ENCODE measurements at regions of chr4 and their contacts with region 1.

Region 1: DNA sequence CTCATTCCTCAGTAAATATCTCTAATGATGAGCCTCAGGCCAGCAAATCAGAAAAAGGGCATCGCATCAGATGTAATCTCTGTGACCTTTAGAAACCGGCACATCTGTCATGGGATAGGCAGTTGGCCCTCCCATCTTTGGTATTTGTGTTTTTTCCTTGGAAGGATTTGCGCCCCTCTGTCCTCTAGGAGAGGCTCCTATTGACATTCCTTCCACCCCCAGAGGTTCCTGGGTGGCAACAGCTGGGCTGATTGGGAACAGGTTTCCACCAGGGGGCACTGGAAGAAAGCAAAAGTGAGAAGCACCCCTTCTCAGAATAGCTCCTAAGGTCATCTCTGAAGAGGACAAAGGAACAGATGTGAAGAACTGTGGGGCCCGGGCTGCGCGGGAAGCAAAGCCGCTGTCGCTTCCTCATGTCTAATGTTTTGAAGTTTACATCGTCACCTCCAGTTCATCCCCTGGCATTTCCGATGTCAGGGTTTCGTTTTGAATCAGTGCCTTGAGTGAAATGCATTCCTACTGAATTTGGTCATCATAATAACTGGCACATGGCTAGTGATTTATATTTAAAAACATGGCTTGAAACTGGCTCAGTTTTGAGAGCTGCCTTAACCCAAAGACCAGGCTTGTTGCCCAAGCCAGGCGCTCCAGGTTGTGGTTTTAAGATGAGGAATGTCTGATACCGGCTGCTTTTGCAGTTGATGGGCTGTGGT is 6.2 kb downstream of the TXK start:
- DNase-seq: peak; percentile 49
- ATAC-seq: peak; percentile 81 to 83

Region 2: GRCh38 chr4:48269861-48270522 is 142.2 kb after region 1 on chr4:
- intact Hi-C with region 1: loop called in 1 of 2 experiments (anchors 10 kb)
- DNase-seq: peak; percentile 94
- ATAC-seq: peak; percentile 98 to 99

Region 3: GRCh38 chr4:48546336-48546735 is 418.5 kb after region 1 on chr4:
- intact Hi-C with region 1: loop called in 1 of 2 experiments (anchors 5 kb)
- DNase-seq: no peak
- ATAC-seq: no peak